ENCODE measurements at regions of chr1 and their contacts with region 1.

Region 1: DNA sequence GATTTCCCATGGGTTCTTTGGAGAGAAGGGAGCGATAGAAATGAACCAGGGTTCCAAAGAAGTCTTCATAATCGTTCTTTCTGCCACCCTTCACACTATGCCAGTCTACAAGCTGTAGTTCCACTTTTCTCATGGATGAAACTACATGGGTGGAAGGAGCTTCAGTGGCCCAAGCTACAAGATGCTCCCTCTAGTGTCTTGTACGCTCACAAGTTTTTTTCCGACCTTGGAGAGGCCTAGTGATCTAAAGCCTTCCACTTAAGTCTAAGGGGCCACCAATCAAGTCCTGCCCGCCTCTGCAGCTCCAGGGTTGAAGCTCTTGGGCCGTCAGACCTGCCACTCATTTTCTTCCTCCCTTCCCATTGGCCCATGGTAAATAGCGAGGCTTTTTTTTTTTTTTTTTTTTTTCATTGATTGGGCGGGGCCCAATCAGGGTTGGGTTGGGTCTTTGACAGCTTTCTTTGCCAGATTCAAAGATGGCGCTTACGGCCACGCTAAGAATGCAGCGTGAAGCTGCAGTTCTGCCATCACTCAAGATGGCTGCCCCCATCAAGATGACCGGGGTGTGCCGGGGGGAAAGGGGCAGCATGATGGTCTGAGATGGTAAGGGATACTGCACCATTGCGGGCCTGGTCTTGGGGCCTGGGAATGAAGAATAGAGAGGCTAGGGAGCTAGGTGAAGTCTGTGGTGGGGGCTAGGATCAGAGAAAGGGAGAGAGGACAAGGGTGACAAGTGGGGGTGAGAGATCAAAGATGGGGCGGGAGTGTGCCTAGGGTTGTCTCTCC is at the start of gene TOMM40L:
- DNase-seq: peak; percentile 85 to 95
- ATAC-seq: peak; percentile 95 to 97 (median 96)
- H3K4me3 ChIP-seq: peak within 1 kb of the TSS; percentile 50 to 94 (median 68)
- H3K27ac ChIP-seq: peak within 1 kb of the TSS; percentile 51 to 92 (median 86)
- H3K4me1 ChIP-seq: peaks cover 6 to 30% (median 25%) of the 10 kb centered on the region in 9 donors
- H3K27me3 ChIP-seq: no peaks in the 10 kb centered on the region
- CTCF ChIP-seq: peak; percentile 17 to 76 (median 57)
- total RNA-seq, gene TOMM40L: 29.8 to 37.6 (median 33.2) TPM

Region 2: GRCh38 chr1:159839116-159839849 is 1386.4 kb before region 1 on chr1:
- intact Hi-C with region 1: no loop called
- DNase-seq: no peak
- ATAC-seq: no peak
- H3K4me3 ChIP-seq: no peak overlapping the region
- H3K27ac ChIP-seq: no peak overlapping the region
- H3K4me1 ChIP-seq: no peaks in the 10 kb centered on the region
- H3K27me3 ChIP-seq: no peaks in the 10 kb centered on the region
- CTCF ChIP-seq: no peak

Region 3: GRCh38 chr1:161192476-161193465 is 33.0 kb before region 1 on chr1:
- intact Hi-C with region 1: loop called in 1 of 10 experiments (anchors 5 kb)
- DNase-seq: peak in 1 of 2 donors; percentile 78
- ATAC-seq: peak; percentile 17 to 71 (median 60)
- H3K4me3 ChIP-seq: peak overlapping the region in 2 of 10 donors; percentile 0 to 67
- H3K27ac ChIP-seq: peak overlapping the region in 5 of 10 donors; percentile 17 to 100 (median 41)
- H3K4me1 ChIP-seq: peaks cover 8 to 71% (median 49%) of the 10 kb centered on the region in 9 donors
- H3K27me3 ChIP-seq: no peaks in the 10 kb centered on the region
- CTCF ChIP-seq: peak; percentile 78 to 92 (median 89)

Region 4: DNA sequence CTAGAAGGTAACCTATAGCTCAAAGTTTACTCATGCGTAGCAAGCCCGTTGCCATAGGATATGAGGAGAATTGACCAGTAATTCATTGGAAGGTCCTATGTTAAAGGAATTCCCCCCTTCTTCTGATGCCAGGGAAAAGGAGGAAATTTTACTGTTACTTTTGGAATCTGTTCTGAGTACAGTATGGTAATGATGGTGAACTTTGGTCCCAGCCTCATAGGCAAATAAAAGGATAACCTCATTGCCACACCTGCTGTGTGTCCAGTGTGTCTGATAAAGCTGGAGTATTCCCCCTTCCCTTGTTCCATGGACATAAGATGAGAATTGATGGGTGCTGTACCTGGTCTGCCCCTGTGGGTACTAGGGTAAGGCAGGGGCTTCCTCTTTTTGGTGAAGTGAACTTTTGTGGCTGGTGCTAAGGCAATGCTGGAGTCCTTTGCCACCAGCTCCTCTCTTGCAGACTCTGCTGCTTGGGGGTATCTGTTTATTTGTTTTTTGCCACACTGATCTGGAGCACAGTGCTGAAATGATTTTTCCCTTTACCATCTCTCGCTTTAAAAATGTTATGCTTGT is 61.8 kb after region 1 on chr1:
- intact Hi-C with region 1: loop called (anchors 2 to 10 kb)
- DNase-seq: no peak
- ATAC-seq: no peak
- H3K4me3 ChIP-seq: no peak overlapping the region
- H3K27ac ChIP-seq: no peak overlapping the region
- H3K4me1 ChIP-seq: peaks cover 0 to 6% (median 0%) of the 10 kb centered on the region in 9 donors
- H3K27me3 ChIP-seq: peaks cover 0 to 8% (median 0%) of the 10 kb centered on the region in 7 donors
- CTCF ChIP-seq: no peak

Region 5: GRCh38 chr1:161314201-161314981 is 88.7 kb after region 1 on chr1 and contains the start of gene SDHC:
- intact Hi-C with region 1: loop called in 4 of 10 experiments (anchors 2 to 5 kb)
- DNase-seq: peak; percentile 90 to 91
- ATAC-seq: peak; percentile 99 to 100 (median 99)
- H3K4me3 ChIP-seq: peak within 1 kb of the TSS; percentile 65 to 98 (median 88)
- H3K27ac ChIP-seq: peak within 1 kb of the TSS; percentile 82 to 99 (median 94)
- H3K4me1 ChIP-seq: peaks cover 3 to 29% (median 17%) of the 10 kb centered on the region in 9 donors
- H3K27me3 ChIP-seq: peaks cover 0 to 3% (median 0%) of the 10 kb centered on the region in 7 donors
- CTCF ChIP-seq: peak in 6 of 9 donors; percentile 11 to 45 (median 28)
- total RNA-seq, gene SDHC: 342 to 459 (median 420) TPM

Region 6: DNA sequence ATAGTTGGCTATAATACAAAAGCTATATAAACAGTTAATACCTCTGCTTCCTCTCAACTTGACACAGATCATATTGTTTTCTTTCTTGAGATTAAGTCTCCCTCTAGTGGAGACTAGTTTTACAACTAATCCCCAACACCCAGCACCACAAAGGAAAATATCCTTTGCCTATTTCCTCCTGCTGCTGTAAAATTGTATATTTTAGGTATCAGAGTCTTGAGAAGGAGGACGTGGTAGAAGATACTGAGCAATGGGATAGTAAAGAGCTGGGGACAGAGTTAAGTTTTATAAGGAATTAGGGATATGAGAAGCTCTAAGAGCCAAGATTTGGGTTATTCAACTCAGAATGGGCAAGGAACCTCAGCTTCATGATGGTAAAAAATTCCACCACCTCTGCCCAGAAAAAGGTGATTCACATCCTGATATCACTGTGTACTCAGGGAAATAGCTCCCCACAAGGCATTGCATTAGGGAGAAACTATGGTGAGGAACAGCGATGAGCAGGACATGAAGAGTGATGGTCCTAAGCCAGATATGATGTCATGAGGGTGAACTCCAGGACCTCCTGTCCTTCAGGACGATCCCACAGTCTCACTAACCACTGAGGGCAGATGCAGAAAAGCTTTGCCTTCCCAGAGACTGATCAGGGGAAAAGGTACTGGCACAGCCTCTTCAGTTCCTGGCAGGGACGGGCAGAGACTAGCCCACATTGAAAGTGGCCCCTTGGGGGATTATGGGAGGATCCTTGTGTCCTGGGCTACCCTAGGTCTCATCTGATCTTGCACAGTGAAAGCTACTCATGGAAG is 156.7 kb after region 1 on chr1:
- intact Hi-C with region 1: loop called (anchors 1 to 10 kb)
- DNase-seq: no peak
- ATAC-seq: peak; percentile 72 to 89 (median 84)
- H3K4me3 ChIP-seq: no peak overlapping the region
- H3K27ac ChIP-seq: peak overlapping the region in 4 of 10 donors; percentile 2 to 79 (median 52)
- H3K4me1 ChIP-seq: peaks cover 0 to 40% (median 0%) of the 10 kb centered on the region in 9 donors
- H3K27me3 ChIP-seq: no peaks in the 10 kb centered on the region
- CTCF ChIP-seq: peak; percentile 39 to 81 (median 75)